CD8-positive, alpha-beta T cell (primary cell): ENCODE measurements at regions of chr10 and their contacts with region 1.

Region 1: DNA sequence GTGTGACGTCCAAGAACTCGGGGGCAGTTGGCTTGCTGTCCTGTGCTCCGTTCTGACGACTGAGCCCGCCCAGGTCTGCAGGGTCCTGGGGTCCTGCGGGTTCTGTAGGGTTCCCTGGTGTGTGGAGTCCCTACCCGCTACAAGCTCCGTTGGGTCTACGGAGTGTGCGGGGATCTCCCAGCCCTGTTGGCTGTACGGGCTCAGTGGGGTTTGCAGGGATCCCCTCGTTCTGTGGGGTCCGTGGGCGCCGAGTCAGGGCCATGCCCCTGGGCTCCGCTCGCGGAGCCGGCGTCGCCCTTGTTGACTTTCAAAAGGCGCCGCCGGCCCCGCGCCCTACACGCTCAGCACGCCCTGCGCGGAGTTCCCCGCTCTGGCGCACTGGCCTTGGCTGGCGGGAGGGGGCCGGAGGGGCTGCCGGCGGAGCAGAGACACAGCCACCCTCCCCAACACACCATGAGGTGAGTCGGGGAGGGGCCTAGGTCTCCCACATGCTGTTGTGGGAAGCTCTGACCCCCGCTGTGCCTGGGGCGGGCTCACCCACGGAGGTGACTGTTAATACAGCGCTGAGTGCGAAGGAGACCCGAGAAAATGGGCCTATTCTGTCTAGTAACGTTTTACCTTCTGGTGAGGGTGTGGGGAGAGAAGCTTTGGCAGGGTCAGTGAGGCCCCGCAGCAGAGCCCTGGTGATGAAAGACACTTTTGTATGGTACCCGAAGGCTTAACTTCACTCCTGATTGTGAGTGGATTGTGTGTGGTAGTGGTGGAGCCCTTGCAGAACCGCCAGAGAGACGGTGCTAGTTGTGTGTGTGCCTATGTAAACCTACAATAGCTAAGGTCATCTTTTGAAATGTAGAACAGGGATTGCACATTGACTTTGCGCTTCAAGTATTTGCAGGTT is 8.1 kb downstream of the TASOR2 start:
- DNase-seq: peak; percentile 30 to 86 (median 66)
- ATAC-seq: peak; percentile 90
- H3K4me3 ChIP-seq: peak overlapping the region; percentile 47 to 51
- H3K4me3 Mint-ChIP-seq: peak overlapping the region; percentile 80
- H3K27ac ChIP-seq: peak overlapping the region in 1 of 2 experiments; percentile 15
- H3K27ac Mint-ChIP-seq: peak overlapping the region; percentile 86
- H3K4me1 ChIP-seq: peaks cover 56% of the 10 kb centered on the region
- H3K4me1 Mint-ChIP-seq: peaks cover 79% of the 10 kb centered on the region
- H3K27me3 ChIP-seq: no peaks in the 10 kb centered on the region
- H3K27me3 Mint-ChIP-seq: no peaks in the 10 kb centered on the region
- CTCF ChIP-seq: no peak

Region 2: GRCh38 chr10:5659702-5660528 is 32.8 kb before region 1 on chr10:
- CTCF ChIA-PET with region 1: no interaction called
- POLR2A ChIA-PET with region 1: interaction called, 3 read pairs
- intact Hi-C with region 1: loop called in 1 of 2 experiments (anchors 5 kb)
- DNase-seq: peak in 1 of 9 experiments; percentile 47
- ATAC-seq: no peak
- H3K4me3 ChIP-seq: no peak overlapping the region
- H3K4me3 Mint-ChIP-seq: no peak overlapping the region
- H3K27ac ChIP-seq: no peak overlapping the region
- H3K27ac Mint-ChIP-seq: no peak overlapping the region
- H3K4me1 ChIP-seq: peaks cover 13% of the 10 kb centered on the region
- H3K4me1 Mint-ChIP-seq: peaks cover 39% of the 10 kb centered on the region
- H3K27me3 ChIP-seq: no peaks in the 10 kb centered on the region
- H3K27me3 Mint-ChIP-seq: no peaks in the 10 kb centered on the region
- CTCF ChIP-seq: no peak

Region 3: GRCh38 chr10:5670662-5671375 is 21.9 kb before region 1 on chr10:
- CTCF ChIA-PET with region 1: no interaction called
- POLR2A ChIA-PET with region 1: no interaction called
- intact Hi-C with region 1: no loop called
- DNase-seq: no peak
- ATAC-seq: no peak
- H3K4me3 ChIP-seq: no peak overlapping the region
- H3K4me3 Mint-ChIP-seq: no peak overlapping the region
- H3K27ac ChIP-seq: no peak overlapping the region
- H3K27ac Mint-ChIP-seq: no peak overlapping the region
- H3K4me1 ChIP-seq: peaks cover 4% of the 10 kb centered on the region
- H3K4me1 Mint-ChIP-seq: peaks cover 7% of the 10 kb centered on the region
- H3K27me3 ChIP-seq: no peaks in the 10 kb centered on the region
- H3K27me3 Mint-ChIP-seq: peaks cover 7% of the 10 kb centered on the region
- CTCF ChIP-seq: no peak

Region 4: DNA sequence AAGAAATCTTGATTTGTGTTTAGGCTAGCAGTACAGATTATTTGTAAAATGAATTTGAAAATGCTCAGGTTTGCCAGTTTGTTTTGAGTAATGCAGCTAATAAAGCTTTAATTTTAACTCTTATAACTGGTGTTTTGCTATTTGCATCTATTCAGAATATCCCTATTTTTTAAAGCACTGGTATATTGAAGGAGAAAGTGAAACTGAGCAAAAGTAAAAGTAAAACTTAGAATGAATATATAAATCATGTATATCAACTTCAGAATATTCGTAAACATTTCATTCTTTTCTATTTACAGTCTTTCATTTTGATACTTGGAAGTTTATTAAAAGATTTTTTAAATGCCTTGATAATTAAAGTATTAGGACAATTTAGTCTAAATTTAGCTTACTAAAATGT is 18.1 kb after region 1 on chr10:
- CTCF ChIA-PET with region 1: no interaction called
- POLR2A ChIA-PET with region 1: interaction called, 3 read pairs
- intact Hi-C with region 1: loop called in 1 of 2 experiments (anchors 2 kb)
- DNase-seq: peak in 1 of 9 experiments; percentile 35
- ATAC-seq: peak; percentile 61
- H3K4me3 ChIP-seq: peak overlapping the region; percentile 7 to 39
- H3K4me3 Mint-ChIP-seq: peak overlapping the region; percentile 78
- H3K27ac ChIP-seq: peak overlapping the region in 1 of 2 experiments; percentile 41
- H3K27ac Mint-ChIP-seq: no peak overlapping the region
- H3K4me1 ChIP-seq: peaks cover 41% of the 10 kb centered on the region
- H3K4me1 Mint-ChIP-seq: peaks cover 77% of the 10 kb centered on the region
- H3K27me3 ChIP-seq: no peaks in the 10 kb centered on the region
- H3K27me3 Mint-ChIP-seq: no peaks in the 10 kb centered on the region
- CTCF ChIP-seq: no peak